Activated naive CD4-positive, alpha-beta T cell treated with anti-CD3 and anti-CD28 coated beads for 36 hours (primary cell): ENCODE measurements at regions of chr9 and their contacts with region 1.

Region 1: DNA sequence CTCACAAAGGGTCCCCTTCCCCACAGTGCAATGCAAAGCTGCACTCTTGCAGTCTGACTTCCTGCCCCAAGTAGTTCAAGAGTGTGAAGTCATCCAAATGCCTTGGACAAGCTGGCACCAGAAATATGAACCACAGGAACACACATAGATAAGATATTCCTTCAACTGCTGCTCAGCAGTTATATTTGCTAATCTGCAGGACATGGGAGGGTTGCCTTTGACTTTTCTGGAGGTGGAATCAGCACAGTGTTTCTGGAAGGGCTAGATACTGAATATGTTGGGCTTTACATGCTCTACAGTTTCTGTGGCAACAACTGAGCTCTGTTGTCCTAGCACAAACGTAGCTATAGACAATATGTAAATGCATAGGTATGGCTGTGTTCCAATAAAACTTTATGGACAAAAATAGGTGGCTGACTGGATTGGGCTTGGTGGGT is 96.7 kb upstream of the PCA3 start:
- DNase-seq: no peak
- H3K4me3 Mint-ChIP-seq: no peak overlapping the region
- H3K27ac Mint-ChIP-seq: no peak overlapping the region
- H3K4me1 Mint-ChIP-seq: no peaks in the 10 kb centered on the region
- H3K27me3 Mint-ChIP-seq: no peaks in the 10 kb centered on the region

Region 2: GRCh38 chr9:76704593-76705204 is 37.2 kb after region 1 on chr9:
- CTCF ChIA-PET with region 1: interaction called, 4 read pairs
- intact Hi-C with region 1: loop called (anchors 2 kb)
- DNase-seq: no peak
- H3K4me3 Mint-ChIP-seq: no peak overlapping the region
- H3K27ac Mint-ChIP-seq: no peak overlapping the region
- H3K4me1 Mint-ChIP-seq: no peaks in the 10 kb centered on the region
- H3K27me3 Mint-ChIP-seq: peaks cover 41% of the 10 kb centered on the region

Region 3: DNA sequence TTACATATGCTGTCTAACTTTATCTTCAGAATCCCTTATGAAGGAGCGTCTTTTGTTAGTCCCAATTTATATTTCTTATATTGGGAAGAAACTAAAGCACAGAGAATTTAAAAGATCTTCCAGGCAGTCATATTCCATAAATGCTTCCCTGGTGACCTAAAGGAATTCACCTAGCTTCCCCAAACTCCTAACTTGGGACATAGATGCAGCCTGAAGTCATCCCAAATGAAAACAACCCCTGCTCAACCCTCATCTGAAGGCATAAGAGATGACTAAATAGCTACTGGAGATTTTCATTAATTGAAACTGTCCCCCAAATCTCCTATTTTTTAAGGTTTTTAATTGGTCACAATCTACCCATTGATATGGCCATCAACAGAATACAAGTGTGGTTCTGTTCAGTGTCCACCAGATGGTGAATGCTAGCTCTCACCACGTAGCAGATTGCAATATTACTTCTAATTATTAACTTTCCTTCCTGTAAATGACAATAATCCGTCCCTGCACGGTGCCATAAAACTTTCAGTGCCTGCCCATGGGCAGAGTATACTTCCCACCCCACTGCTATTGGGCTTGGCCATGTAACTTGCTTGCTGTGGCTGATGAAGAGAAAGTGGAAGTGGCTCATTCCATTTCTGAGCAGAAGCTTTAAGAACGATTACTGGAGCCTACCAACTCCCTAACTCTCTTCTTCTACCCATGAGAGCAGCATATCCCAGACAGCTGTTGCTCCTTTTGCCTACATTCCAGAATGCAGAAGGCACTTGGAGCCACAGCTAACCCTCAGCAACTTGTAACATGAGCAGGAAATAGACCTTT is 219.7 kb after region 1 on chr9:
- CTCF ChIA-PET with region 1: no interaction called
- intact Hi-C with region 1: no loop called
- DNase-seq: no peak
- H3K4me3 Mint-ChIP-seq: no peak overlapping the region
- H3K27ac Mint-ChIP-seq: no peak overlapping the region
- H3K4me1 Mint-ChIP-seq: no peaks in the 10 kb centered on the region
- H3K27me3 Mint-ChIP-seq: no peaks in the 10 kb centered on the region